Heart left ventricle (tissue), 16 donors: ENCODE measurements at regions of chr6 and their contacts with region 1.

Region 1: DNA sequence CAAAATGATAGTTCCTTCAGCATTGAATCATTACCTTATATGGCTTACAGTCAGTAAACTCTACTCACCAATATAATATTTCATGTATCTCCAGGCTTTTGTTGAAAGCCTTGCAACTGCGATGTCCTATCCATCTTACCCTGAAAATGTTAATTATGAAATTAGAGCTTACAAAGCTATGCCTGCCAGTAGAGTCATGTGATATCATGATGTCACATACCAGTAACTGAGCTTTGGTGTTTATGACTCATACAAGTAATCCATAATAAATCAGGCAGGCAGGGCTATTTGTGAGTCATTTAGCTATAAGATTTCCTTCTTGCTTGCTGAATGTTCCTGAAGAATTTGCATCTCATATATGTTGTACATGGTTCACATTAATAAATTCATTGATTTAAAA is 44.9 kb upstream of the FAM83B start:
- DNase-seq: no peak
- ATAC-seq: no peak
- H3K4me3 ChIP-seq: no peak overlapping the region
- H3K27ac ChIP-seq: no peak overlapping the region
- H3K4me1 ChIP-seq: no peaks in the 10 kb centered on the region
- H3K27me3 ChIP-seq: no peaks in the 10 kb centered on the region
- CTCF ChIP-seq: no peak
- POLR2A ChIP-seq: no peak

Region 2: GRCh38 chr6:54892831-54893230 is 91.2 kb after region 1 on chr6:
- intact Hi-C with region 1: no loop called
- DNase-seq: no peak
- ATAC-seq: no peak
- H3K4me3 ChIP-seq: no peak overlapping the region
- H3K27ac ChIP-seq: no peak overlapping the region
- H3K4me1 ChIP-seq: no peaks in the 10 kb centered on the region
- H3K27me3 ChIP-seq: no peaks in the 10 kb centered on the region
- CTCF ChIP-seq: no peak
- POLR2A ChIP-seq: no peak

Region 3: DNA sequence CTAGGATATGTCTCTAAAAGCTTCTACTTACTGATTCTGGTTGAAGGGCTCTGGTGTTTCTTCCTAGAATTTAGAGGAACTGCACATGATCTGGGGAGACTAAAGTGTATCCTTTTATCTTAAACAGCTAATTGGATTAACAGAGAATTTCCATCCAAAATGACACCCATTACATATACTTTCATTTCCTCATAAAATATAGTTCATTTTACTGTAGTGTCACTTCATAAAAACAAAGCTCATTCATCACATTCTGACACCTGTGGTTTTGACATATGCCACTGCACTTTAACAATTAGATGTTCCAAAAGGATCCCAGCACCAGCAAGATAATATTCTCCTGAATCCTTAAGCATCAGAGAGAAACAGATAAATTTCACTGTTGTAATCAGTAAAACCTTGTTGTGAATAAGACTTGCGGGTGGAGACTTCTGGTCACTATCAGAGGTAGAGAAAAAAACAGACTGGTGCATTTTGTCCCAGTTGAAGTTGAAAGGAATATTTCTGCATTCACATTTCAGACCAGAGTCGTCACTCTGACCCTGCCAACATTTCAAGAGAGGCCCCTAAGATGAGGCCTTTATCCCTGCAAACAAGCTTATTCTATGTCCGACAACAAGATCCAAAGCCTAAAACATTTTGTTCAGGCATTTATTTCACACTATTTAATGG is 1249.0 kb after region 1 on chr6:
- intact Hi-C with region 1: loop called in 1 of 10 experiments (anchors 10 kb)
- DNase-seq: no peak
- ATAC-seq: no peak
- H3K4me3 ChIP-seq: no peak overlapping the region
- H3K27ac ChIP-seq: no peak overlapping the region
- H3K4me1 ChIP-seq: peaks cover 0 to 13% (median 0%) of the 10 kb centered on the region in 12 donors
- H3K27me3 ChIP-seq: no peaks in the 10 kb centered on the region
- CTCF ChIP-seq: no peak
- POLR2A ChIP-seq: no peak